ENCODE measurements at regions of chr7 and their contacts with region 1.

Region 1: GRCh38 chr7:100464210-100464660 is at the start of gene SPACDR:
- DNase-seq: no peak
- ATAC-seq: no peak
- H3K4me3 ChIP-seq: no peak within 1 kb of the TSS
- H3K4me1 ChIP-seq: no peaks in the 10 kb centered on the region
- CTCF ChIP-seq: no peak
- total RNA-seq, gene SPACDR: 0.43 to 1.0 (median 0.96) TPM

Region 2: GRCh38 chr7:100563809-100564400 is 99.7 kb after region 1 on chr7:
- intact Hi-C with region 1: loop called in 1 of 2 experiments (anchors 5 kb)
- DNase-seq: peak; percentile 80 to 93 (median 87)
- ATAC-seq: peak; percentile 68
- H3K4me3 ChIP-seq: no peak overlapping the region
- H3K4me1 ChIP-seq: peaks cover 14% of the 10 kb centered on the region
- CTCF ChIP-seq: peak; percentile 86

Measured in mucosa of descending colon (tissue), 3 donors.